Panc1 (cell line): ENCODE measurements at regions of chr10 and their contacts with region 1.

Region 1: GRCh38 chr10:93299606-93300287 is 182.4 kb downstream of the MYOF start:
- DNase-seq: no peak
- ATAC-seq: no peak
- H3K4me3 ChIP-seq: no peak overlapping the region
- H3K27ac ChIP-seq: no peak overlapping the region
- H3K4me1 ChIP-seq: no peaks in the 10 kb centered on the region
- H3K27me3 ChIP-seq: no peaks in the 10 kb centered on the region
- CTCF ChIP-seq: no peak

Region 2: DNA sequence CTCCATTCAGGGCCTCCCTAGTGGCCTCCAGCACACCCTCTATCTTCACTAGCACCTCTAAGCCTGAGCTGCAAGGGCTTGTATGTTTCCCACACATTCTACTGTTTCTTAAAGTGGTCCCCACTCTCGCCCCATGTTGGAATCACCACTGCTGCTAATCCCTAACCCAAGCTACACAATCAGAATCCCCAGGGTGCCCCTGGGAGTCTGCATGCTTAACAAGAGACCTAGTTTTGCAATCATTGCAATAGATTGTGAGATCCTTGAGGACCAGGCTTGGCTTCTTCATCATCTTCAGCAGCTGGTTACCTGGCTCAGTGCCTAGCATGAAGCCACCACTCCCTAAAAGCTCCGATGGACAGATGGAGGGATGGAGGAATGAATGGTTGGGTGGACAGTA is 68.5 kb after region 1 on chr10:
- CTCF ChIA-PET with region 1: no interaction called
- POLR2A ChIA-PET with region 1: no interaction called
- in situ Hi-C with region 1: no loop called
- intact Hi-C with region 1: no loop called
- DNase-seq: no peak
- ATAC-seq: no peak
- H3K4me3 ChIP-seq: no peak overlapping the region
- H3K27ac ChIP-seq: no peak overlapping the region
- H3K4me1 ChIP-seq: no peaks in the 10 kb centered on the region
- H3K27me3 ChIP-seq: no peaks in the 10 kb centered on the region
- CTCF ChIP-seq: no peak

Region 3: GRCh38 chr10:93615576-93616235 is 316.0 kb after region 1 on chr10:
- CTCF ChIA-PET with region 1: no interaction called
- POLR2A ChIA-PET with region 1: interaction called, 13 read pairs
- in situ Hi-C with region 1: no loop called
- intact Hi-C with region 1: no loop called
- DNase-seq: no peak
- ATAC-seq: no peak
- H3K4me3 ChIP-seq: no peak overlapping the region
- H3K27ac ChIP-seq: no peak overlapping the region
- H3K4me1 ChIP-seq: no peaks in the 10 kb centered on the region
- H3K27me3 ChIP-seq: peaks cover 6% of the 10 kb centered on the region; the same call in 1 of the 2 replicates
- CTCF ChIP-seq: no peak